Posterior vena cava (tissue), 2 donors: ENCODE measurements at regions of chr11 and their contacts with region 1.

Region 1: GRCh38 chr11:45025716-45026492 is 75.2 kb upstream of the TP53I11 start:
- DNase-seq: peak; percentile 89

Region 2: DNA sequence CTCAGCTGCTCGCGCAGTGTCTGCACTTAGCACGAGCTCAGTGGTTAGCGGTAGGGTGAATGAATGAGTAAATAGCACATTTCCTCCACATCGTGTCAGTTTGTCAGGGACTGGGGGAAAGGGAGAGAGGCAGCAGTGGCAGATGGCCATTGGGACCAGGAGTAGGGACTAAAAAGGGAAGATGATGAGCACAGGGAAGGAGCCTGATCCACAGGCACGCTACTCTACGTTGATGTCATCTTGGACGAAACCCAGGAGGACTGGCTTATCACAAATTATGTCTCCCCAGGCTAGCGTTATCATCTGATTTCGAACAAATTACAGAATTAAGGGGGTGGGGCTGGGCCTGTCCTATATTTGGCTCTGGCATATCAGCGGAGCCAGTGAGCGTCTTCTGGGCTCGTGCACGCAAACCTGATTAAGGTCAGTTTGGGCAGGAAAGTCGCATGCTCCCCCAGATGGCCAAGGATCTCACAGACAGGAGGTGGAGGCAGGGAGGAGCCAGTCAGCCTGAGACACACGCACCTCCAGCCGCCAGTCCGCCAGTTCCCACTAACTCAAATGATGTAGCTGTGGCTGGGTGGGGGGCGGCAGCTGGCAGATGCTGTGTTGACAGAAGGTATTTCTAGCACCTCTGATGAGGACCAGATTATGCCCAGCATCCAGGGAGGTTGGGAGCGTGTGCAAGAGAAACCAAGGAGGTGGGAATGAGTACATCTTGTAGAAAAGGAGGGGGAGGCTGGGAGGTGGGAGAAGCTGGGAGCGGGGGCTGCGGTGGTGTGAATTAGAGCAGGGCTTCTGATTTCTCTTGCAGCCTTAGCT is 23.2 kb after region 1 on chr11:
- intact Hi-C with region 1: no loop called
- DNase-seq: peak; percentile 79

Region 3: DNA sequence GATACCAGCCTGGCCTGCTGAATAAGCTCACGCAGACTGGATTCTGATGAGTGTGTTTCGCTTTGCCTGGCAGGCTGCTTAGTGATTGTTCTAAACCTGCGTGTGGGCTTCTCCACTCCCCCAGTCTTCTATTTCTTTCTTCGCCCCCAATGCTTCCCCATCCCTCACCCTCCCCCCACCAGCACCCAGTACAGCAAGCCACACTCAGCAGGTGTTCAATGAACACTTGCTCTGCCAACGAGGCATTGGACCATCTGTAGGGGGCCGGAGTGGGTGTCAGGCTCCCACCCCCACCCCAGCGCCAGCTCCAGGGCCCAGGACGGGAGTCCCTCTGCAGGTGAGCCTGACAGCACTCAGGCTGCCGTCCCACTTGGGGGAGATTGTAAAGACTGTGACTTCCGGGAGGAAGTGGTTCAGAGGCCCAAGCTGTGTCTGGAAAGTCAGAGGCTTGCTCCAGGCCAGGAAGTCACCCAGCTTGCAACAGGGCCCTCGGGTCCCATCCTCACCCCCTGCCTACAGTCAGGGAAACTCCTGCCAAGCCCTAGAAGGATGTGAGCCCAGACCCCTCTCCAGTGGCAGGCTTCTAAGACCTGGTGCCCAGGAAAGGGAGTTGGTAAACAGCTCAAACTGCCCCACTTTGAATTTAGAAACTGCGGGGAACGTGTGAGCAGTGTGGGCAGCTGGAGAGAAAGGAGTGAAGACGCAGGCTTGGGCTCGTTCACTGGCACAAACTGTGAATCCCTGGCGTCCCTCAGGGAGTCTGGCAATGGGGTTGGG is 54.2 kb after region 1 on chr11:
- intact Hi-C with region 1: loop called in 1 of 2 experiments (anchors 10 kb)
- DNase-seq: no peak